ENCODE measurements at regions of chr10 and their contacts with region 1.

Region 1: GRCh38 chr10:102503281-102504220 is at the start of gene SUFU:
- DNase-seq: peak; percentile 98 to 100 (median 99)
- H3K4me3 ChIP-seq: peak within 1 kb of the TSS; percentile 80 to 94 (median 82)
- H3K27ac ChIP-seq: peak within 1 kb of the TSS in 4 of 5 donors; percentile 65 to 92 (median 76)
- H3K4me1 ChIP-seq: peaks cover 8 to 33% of the 10 kb centered on the region in 2 donors
- H3K27me3 ChIP-seq: no peaks in the 10 kb centered on the region
- CTCF ChIP-seq: peak; percentile 78 to 96 (median 92)
- POLR2A ChIP-seq: peak in 1 of 2 donors; percentile 53
- total RNA-seq, gene SUFU: 5.8 to 20.2 (median 12.5) TPM

Region 2: DNA sequence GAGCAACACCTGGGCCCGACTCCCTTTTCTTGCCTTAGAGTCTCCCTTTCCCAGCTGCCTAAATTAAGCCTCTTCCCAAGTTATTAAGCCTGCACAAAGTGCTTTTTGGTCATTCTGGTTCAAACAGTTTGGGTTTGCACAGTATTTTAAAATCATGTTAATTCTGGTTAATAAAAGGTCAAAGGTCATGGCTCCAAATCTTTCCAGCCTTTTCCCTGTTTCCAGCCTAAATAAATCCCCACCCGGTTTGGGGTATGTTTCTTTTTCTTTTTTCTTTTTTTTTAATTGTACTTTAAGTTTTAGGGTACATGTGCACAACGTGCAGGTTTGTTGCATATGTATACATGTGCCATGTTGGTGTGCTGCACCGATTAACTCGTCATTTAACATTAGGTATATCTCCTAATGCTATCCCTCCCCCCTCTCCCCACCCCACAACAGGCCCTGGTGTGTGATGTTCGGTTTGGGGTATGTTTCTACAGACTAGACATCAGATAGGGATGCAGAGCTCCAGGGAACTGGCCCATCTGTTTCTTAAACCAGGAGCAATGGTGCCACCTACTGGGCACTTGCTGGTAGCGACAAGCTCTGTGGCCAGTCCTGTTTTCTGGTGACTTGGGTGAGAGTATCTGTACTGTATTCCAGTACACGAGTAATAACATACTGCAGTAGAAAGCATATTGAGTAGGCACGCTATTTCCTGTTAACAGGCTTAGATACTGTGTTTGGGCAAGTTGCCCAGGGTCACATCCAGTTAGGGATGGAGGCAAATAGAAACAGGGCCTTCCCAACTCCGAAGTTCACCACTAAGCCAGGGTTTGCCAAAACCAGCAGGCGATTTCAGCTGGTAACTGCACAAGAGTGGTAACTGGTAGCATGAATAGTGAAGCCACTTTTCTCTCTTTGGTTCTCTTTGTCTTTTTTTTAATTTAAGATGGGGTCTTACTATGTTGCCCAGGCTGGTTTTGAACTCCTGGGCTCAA is 80.2 kb after region 1 on chr10:
- intact Hi-C with region 1: loop called (anchors 5 kb)
- DNase-seq: peak; percentile 86 to 97 (median 91)
- H3K4me3 ChIP-seq: no peak overlapping the region
- H3K27ac ChIP-seq: peak overlapping the region in 2 of 5 donors; percentile 3 to 10
- H3K4me1 ChIP-seq: peaks cover 0 to 13% of the 10 kb centered on the region in 2 donors
- H3K27me3 ChIP-seq: no peaks in the 10 kb centered on the region
- CTCF ChIP-seq: peak; percentile 78 to 94 (median 88)
- POLR2A ChIP-seq: no peak

Region 3: DNA sequence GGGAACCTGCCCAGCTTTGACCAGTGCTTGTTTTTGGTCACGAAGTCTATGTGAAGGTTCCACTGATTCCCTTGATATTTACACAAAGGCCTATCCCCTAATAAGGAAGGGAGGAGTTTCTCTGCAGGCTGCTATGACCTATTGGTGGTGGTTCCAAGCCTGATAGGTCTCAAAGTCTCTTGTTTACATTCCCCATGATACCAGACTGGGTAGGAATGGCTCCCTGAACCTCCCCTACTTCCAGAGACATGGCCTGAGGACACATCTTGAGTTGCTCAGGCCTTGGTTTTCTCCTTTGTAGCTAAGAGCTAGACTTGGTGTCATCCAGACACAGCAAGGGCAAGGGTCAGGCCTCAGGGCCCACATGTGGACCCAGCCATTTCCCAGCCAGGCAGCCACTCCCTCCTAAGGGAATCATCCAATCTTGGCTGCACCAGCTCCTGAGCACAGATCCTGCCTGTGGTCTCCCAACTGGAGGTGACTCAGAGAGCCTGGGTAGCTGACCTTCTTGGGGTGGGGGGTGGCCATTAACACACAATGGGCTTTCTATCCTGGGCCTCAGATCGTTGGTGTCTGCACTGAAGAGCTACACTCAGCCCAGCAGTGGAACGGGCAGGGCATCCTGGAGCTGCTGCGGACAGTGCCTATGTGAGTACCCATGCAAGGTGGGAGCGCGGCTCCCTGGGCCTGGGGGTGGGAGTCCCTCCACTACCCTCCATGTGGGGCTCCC is 89.7 kb after region 1 on chr10:
- intact Hi-C with region 1: loop called in 1 of 2 experiments (anchors 5 kb)
- DNase-seq: no peak
- H3K4me3 ChIP-seq: no peak overlapping the region
- H3K27ac ChIP-seq: no peak overlapping the region
- H3K4me1 ChIP-seq: peaks cover 0 to 19% of the 10 kb centered on the region in 2 donors
- H3K27me3 ChIP-seq: no peaks in the 10 kb centered on the region
- CTCF ChIP-seq: no peak
- POLR2A ChIP-seq: no peak

Measured in adrenal gland (tissue), 19 donors.